PC-3 (cell line): ENCODE measurements at regions of chr7 and their contacts with region 1.

Region 1: DNA sequence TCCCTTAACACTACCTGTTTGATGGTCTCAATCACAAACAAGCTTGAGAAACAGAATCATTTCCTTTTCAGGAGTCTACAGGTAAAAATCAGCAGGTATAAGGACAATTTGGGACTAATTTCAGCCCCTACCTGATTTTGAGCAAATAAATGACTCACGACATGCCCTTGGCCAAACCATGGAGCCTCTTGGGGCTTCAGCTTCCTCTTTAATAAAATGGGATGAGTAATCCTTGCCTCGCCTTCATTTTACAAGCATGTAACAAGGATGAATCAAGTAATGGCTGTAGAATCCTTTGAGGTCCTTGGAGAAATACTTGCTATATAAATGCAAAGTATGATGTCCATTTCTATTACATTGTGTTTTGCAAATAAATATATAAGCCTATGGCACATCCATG is 212.8 kb upstream of the PODXL start:
- DNase-seq: peak; percentile 95
- ATAC-seq: peak; percentile 98
- H3K4me3 ChIP-seq: no peak overlapping the region
- H3K27ac ChIP-seq: peak overlapping the region; percentile 45
- H3K4me1 ChIP-seq: peaks cover 21% of the 10 kb centered on the region
- H3K27me3 ChIP-seq: no peaks in the 10 kb centered on the region; the same call in 1 of the 2 replicates
- CTCF ChIP-seq: no peak

Region 2: GRCh38 chr7:131604841-131605279 is 164.4 kb before region 1 on chr7:
- CTCF ChIA-PET with region 1: no interaction called
- POLR2A ChIA-PET with region 1: no interaction called
- intact Hi-C with region 1: no loop called
- DNase-seq: peak; percentile 79
- ATAC-seq: peak; percentile 79
- H3K4me3 ChIP-seq: no peak overlapping the region
- H3K27ac ChIP-seq: 0 out of 2 replicates have a peak overlapping the region, but pooled peaks have one; percentile 3
- H3K4me1 ChIP-seq: peaks cover 26% of the 10 kb centered on the region
- H3K27me3 ChIP-seq: no peaks in the 10 kb centered on the region
- CTCF ChIP-seq: no peak

Region 3: DNA sequence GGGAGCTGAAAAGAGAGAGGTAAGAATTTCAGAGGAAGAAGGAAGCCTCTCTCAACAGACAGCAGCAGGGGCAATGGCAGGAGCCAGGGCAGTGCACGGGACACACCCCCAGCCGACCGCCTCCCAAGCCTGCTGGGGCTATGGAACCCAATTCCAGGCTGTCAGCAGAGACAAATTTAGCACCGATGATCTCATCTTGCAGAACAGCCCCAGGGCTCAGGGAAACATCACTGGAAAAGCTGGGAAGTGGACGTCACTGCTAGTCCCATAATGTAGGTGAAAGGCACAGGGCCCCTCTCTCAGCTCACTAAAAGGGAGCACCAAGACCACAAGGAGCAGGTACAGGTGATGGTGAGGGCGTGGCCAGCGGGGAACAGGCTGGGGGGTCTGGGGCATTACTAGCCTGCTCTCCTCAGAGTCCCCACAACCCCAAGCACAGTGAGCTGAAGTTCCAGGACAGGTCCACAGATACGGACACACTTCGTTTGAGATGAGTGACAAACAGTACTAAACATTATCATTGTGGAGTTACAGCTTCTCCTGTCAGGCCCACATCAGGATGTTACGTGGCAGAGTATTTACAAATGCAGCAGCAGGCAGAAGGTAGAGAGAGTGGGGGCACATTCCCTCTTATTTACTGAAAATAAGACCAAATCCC is 703.4 kb after region 1 on chr7:
- CTCF ChIA-PET with region 1: no interaction called
- POLR2A ChIA-PET with region 1: interaction called, 16 read pairs
- intact Hi-C with region 1: no loop called
- DNase-seq: peak; percentile 64
- ATAC-seq: peak; percentile 71
- H3K4me3 ChIP-seq: no peak overlapping the region; the same call in 1 of the 2 replicates
- H3K27ac ChIP-seq: peak overlapping the region; percentile 49
- H3K4me1 ChIP-seq: peaks cover 36% of the 10 kb centered on the region
- H3K27me3 ChIP-seq: no peaks in the 10 kb centered on the region
- CTCF ChIP-seq: no peak